ENCODE measurements at regions of chr1 and their contacts with region 1.

Region 1: DNA sequence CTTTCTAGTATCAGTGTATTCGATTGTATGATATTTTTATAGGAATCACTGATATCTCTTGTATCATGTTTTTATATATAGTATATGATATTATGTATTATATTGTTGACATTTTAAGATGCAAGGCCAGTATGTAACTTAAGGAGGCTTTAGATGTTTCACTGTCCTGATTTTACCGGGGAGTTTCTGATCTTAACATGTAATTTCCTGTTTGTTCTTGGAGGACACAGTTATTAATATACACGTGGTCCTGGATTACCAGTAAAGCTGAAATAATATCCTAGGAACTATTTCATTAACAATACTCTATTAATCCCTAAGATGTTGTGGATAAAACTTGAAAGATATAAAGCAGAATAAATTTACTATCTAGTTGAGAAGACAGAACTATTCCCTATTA is 19.5 kb downstream of the SDCCAG8 start:
- DNase-seq: no peak
- H3K4me3 ChIP-seq: no peak overlapping the region
- H3K27ac ChIP-seq: no peak overlapping the region
- H3K4me1 ChIP-seq: peaks cover 8% of the 10 kb centered on the region
- H3K27me3 ChIP-seq: no peaks in the 10 kb centered on the region
- CTCF ChIP-seq: no peak
- POLR2A ChIP-seq: no peak

Region 2: GRCh38 chr1:243312952-243313634 is 37.8 kb after region 1 on chr1:
- CTCF ChIA-PET with region 1: no interaction called
- POLR2A ChIA-PET with region 1: no interaction called
- dilution Hi-C with region 1: no loop called
- intact Hi-C with region 1: loop called (anchors 1 kb)
- DNase-seq: no peak
- H3K4me3 ChIP-seq: no peak overlapping the region
- H3K27ac ChIP-seq: no peak overlapping the region
- H3K4me1 ChIP-seq: peaks cover 7% of the 10 kb centered on the region
- H3K27me3 ChIP-seq: no peaks in the 10 kb centered on the region
- CTCF ChIP-seq: no peak
- POLR2A ChIP-seq: no peak

Region 3: GRCh38 chr1:243393096-243393495 is 117.8 kb after region 1 on chr1:
- CTCF ChIA-PET with region 1: no interaction called
- POLR2A ChIA-PET with region 1: no interaction called
- dilution Hi-C with region 1: no loop called
- intact Hi-C with region 1: no loop called
- DNase-seq: no peak
- H3K4me3 ChIP-seq: no peak overlapping the region
- H3K27ac ChIP-seq: no peak overlapping the region
- H3K4me1 ChIP-seq: peaks cover 19% of the 10 kb centered on the region
- H3K27me3 ChIP-seq: no peaks in the 10 kb centered on the region
- CTCF ChIP-seq: no peak
- POLR2A ChIP-seq: no peak